Activated T-helper 2 cell treated with anti-CD3 and anti-CD28 coated beads, Interferon-gamma antibody, Interleukin-2, Interleukin-4, amounts not matched to agents 10 μg/mL and 5 μg/mL and 100 μg/mL, durations not matched to agents 14 hours and 24 hours and 36 hours (primary cell): ENCODE measurements at regions of chr6 and their contacts with region 1.

Region 1: GRCh38 chr6:105810105-105810921 is 275.8 kb upstream of the PRDM1 start:
- DNase-seq: peak; percentile 70
- H3K4me3 Mint-ChIP-seq: peak overlapping the region; percentile 39
- H3K27ac Mint-ChIP-seq: peak overlapping the region; percentile 78
- H3K4me1 Mint-ChIP-seq: peaks cover 64% of the 10 kb centered on the region
- H3K27me3 Mint-ChIP-seq: no peaks in the 10 kb centered on the region

Region 2: DNA sequence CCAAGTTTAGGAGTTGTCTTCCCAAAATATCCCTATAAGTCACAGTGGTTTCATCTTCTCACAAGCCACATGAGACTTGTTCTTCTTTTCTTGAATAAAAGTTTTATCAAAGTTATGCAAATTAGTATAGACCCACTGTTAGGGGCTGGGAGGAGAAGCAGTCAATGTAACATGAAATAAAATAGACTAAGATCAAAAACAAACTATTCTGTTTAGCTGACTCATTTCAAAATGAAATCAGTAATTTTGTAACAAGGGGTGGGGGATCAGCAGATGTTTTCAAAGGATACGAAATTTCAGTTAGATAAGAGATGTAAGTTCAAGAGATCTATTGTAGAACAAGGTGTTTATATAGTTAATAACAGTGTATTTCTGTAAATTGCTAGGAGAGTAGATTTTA is 63.8 kb before region 1 on chr6:
- intact Hi-C with region 1: loop called (anchors 1 kb)
- DNase-seq: no peak
- H3K4me3 Mint-ChIP-seq: no peak overlapping the region
- H3K27ac Mint-ChIP-seq: peak overlapping the region; percentile 47
- H3K4me1 Mint-ChIP-seq: peaks cover 59% of the 10 kb centered on the region
- H3K27me3 Mint-ChIP-seq: no peaks in the 10 kb centered on the region

Region 3: GRCh38 chr6:105781248-105781647 is 29.1 kb before region 1 on chr6:
- intact Hi-C with region 1: loop called (anchors 1 kb)
- DNase-seq: no peak
- H3K4me3 Mint-ChIP-seq: no peak overlapping the region
- H3K27ac Mint-ChIP-seq: peak overlapping the region; percentile 36
- H3K4me1 Mint-ChIP-seq: peaks cover 54% of the 10 kb centered on the region
- H3K27me3 Mint-ChIP-seq: no peaks in the 10 kb centered on the region

Region 4: GRCh38 chr6:105793130-105793529 is 17.2 kb before region 1 on chr6:
- intact Hi-C with region 1: loop called (anchors 1 kb)
- DNase-seq: no peak
- H3K4me3 Mint-ChIP-seq: no peak overlapping the region
- H3K27ac Mint-ChIP-seq: peak overlapping the region; percentile 34
- H3K4me1 Mint-ChIP-seq: peaks cover 86% of the 10 kb centered on the region
- H3K27me3 Mint-ChIP-seq: no peaks in the 10 kb centered on the region

Region 5: GRCh38 chr6:105869835-105870440 is 59.6 kb after region 1 on chr6:
- intact Hi-C with region 1: no loop called
- DNase-seq: no peak
- H3K4me3 Mint-ChIP-seq: no peak overlapping the region
- H3K27ac Mint-ChIP-seq: no peak overlapping the region
- H3K4me1 Mint-ChIP-seq: peaks cover 20% of the 10 kb centered on the region
- H3K27me3 Mint-ChIP-seq: peaks cover 19% of the 10 kb centered on the region

Region 6: DNA sequence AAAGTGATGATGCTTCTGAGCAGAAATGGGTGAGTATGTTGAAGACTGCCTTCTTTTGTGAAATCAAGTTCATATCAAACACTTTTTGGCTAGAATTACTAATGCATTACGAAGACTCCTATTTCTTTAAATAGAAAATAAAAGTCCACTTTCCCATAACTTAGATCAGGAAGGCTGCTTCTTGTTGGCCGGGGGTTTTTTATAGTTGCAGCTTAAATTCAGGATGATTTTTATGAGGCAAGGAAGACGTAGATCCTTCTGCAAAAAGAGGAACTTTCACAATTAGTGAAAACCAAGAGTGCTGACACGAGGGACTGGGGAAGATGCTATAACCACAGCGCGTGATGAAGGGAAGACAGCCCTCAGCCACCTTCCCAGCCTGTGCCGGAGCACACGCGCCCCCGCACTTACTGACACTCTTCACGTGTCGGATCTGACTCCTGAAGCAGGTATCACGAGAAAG is 69.7 kb after region 1 on chr6:
- intact Hi-C with region 1: loop called (anchors 5 kb)
- DNase-seq: no peak
- H3K4me3 Mint-ChIP-seq: peak overlapping the region; percentile 43
- H3K27ac Mint-ChIP-seq: peak overlapping the region; percentile 21
- H3K4me1 Mint-ChIP-seq: peaks cover 58% of the 10 kb centered on the region
- H3K27me3 Mint-ChIP-seq: peaks cover 4% of the 10 kb centered on the region

Region 7: GRCh38 chr6:105981002-105981887 is 170.9 kb after region 1 on chr6:
- intact Hi-C with region 1: loop called (anchors 5 kb)
- DNase-seq: peak; percentile 36
- H3K4me3 Mint-ChIP-seq: peak overlapping the region; percentile 74
- H3K27ac Mint-ChIP-seq: peak overlapping the region; percentile 85
- H3K4me1 Mint-ChIP-seq: peaks cover 56% of the 10 kb centered on the region
- H3K27me3 Mint-ChIP-seq: peaks cover 3% of the 10 kb centered on the region

Region 8: DNA sequence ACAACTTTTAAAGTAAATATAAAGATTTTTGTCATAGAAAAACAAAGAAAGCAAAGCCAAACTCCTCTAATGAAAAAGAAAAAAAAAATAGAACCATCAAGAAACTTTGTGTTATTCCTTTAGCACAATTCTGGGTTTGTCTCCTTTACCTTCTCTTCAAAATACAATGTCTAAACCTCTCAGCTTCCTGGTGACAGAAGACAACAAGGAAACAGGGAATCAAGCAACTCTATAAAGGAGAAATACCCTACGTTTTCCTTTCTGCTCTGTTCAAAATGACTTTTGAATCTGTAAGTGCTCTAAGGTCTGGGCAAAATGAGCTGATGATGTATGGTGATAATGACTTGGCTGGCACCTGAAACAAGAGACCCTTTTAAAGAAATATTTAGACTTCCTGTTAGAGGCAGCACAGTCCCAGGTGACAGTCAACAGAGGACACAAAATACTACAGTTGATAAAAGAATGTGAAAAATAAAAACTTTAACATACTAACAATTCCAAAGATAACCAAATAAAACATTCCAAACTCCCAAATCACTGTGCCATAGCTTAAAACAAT is 377.2 kb after region 1 on chr6:
- intact Hi-C with region 1: loop called (anchors 2 kb)
- DNase-seq: no peak
- H3K4me3 Mint-ChIP-seq: peak overlapping the region; percentile 48
- H3K27ac Mint-ChIP-seq: peak overlapping the region; percentile 86
- H3K4me1 Mint-ChIP-seq: peaks cover 68% of the 10 kb centered on the region
- H3K27me3 Mint-ChIP-seq: no peaks in the 10 kb centered on the region